ENCODE measurements at regions of chr13 and their contacts with region 1.

Region 1: DNA sequence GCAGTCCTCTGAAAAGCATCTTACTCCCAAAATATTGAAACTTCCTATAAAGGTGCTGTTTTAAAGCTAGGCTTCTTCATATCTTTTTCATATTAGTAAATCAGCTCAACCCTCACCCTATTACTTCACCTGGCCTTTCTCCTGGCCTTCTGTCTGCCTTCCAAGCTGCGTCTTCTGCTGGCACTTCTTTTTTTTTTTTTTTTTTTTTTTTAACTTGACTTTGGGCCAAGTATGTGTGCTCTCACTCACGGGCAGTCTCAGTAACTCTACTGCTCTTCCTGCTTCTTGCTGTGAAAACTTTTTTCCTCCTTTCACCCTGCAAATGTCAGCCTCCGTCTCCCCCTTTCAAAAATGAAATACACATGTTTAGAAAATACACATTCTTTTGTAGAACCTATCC is 41.2 kb upstream of the KCTD4 start:
- DNase-seq: peak; percentile 71
- H3K4me3 Mint-ChIP-seq: peak overlapping the region; percentile 4
- H3K27ac Mint-ChIP-seq: peak overlapping the region; percentile 2
- H3K4me1 Mint-ChIP-seq: peaks cover 23% of the 10 kb centered on the region
- H3K27me3 Mint-ChIP-seq: no peaks in the 10 kb centered on the region
- CTCF ChIP-seq: no peak

Region 2: GRCh38 chr13:45055198-45055901 is 186.7 kb before region 1 on chr13:
- CTCF ChIA-PET with region 1: no interaction called
- POLR2A ChIA-PET with region 1: interaction called, 13 read pairs
- intact Hi-C with region 1: no loop called
- DNase-seq: peak; percentile 93
- H3K4me3 Mint-ChIP-seq: peak overlapping the region; percentile 66
- H3K27ac Mint-ChIP-seq: peak overlapping the region; percentile 88
- H3K4me1 Mint-ChIP-seq: peaks cover 14% of the 10 kb centered on the region
- H3K27me3 Mint-ChIP-seq: no peaks in the 10 kb centered on the region
- CTCF ChIP-seq: no peak

Region 3: GRCh38 chr13:45200701-45201227 is 41.3 kb before region 1 on chr13 and contains the start of gene KCTD4:
- CTCF ChIA-PET with region 1: interaction called, 3 read pairs
- POLR2A ChIA-PET with region 1: interaction called, 78 read pairs
- intact Hi-C with region 1: loop called (anchors 5 kb)
- DNase-seq: peak; percentile 42
- H3K4me3 Mint-ChIP-seq: no peak within 1 kb of the TSS
- H3K27ac Mint-ChIP-seq: peak within 1 kb of the TSS; percentile 8
- H3K4me1 Mint-ChIP-seq: peaks cover 34% of the 10 kb centered on the region
- H3K27me3 Mint-ChIP-seq: no peaks in the 10 kb centered on the region
- CTCF ChIP-seq: no peak
- total RNA-seq, gene KCTD4: 0.54 and 0.79 TPM in 2 replicates

Region 4: GRCh38 chr13:45206340-45206739 is 35.7 kb before region 1 on chr13:
- CTCF ChIA-PET with region 1: interaction called, 6 read pairs
- POLR2A ChIA-PET with region 1: interaction called, 78 read pairs
- intact Hi-C with region 1: loop called (anchors 5 kb)
- DNase-seq: peak; percentile 88
- H3K4me3 Mint-ChIP-seq: peak overlapping the region; percentile 56
- H3K27ac Mint-ChIP-seq: peak overlapping the region; percentile 88
- H3K4me1 Mint-ChIP-seq: peaks cover 47% of the 10 kb centered on the region
- H3K27me3 Mint-ChIP-seq: no peaks in the 10 kb centered on the region
- CTCF ChIP-seq: no peak

Region 5: DNA sequence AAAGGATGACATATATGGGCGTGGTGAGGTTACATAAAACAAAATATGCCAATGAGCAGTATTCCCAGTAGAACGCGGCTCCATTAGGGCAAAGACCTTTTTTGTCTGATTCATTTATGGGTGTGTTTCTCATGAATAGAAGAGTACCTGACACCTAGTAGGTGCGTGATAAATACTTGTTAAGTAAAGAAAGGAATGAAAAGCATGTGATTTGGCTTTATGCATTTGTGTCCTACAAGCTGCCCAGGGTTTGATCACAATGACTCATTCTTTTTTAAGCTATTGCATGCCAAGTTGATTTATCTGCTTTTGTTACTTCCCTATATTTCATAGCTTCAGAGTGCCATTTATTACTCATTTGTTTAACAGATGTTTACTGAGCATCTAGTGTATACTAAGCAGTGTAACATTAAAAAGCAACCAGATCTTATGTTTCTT is 22.1 kb before region 1 on chr13:
- CTCF ChIA-PET with region 1: interaction called, 3 read pairs
- POLR2A ChIA-PET with region 1: interaction called, 73 read pairs
- intact Hi-C with region 1: no loop called
- DNase-seq: peak; percentile 90
- H3K4me3 Mint-ChIP-seq: peak overlapping the region; percentile 28
- H3K27ac Mint-ChIP-seq: peak overlapping the region; percentile 81
- H3K4me1 Mint-ChIP-seq: peaks cover 48% of the 10 kb centered on the region
- H3K27me3 Mint-ChIP-seq: no peaks in the 10 kb centered on the region
- CTCF ChIP-seq: no peak

Region 6: DNA sequence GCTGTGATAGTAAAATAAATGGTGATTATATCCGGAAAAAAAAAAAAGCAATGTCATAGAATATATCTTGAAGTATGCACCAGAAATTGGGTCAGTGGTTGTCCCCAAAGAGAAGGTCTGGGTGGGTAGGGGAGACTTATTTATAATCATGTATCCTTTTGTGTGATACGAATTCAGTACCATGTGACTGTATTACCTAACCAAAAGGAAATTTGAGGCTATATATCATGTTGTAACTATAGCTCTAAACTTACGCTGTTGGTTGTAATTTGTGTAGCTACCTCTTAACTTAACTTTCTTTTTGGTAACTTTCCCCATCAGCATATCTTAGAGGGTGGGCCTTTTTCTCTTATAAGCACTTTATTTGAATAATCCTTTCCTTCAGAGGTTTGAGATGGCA is 16.0 kb before region 1 on chr13:
- CTCF ChIA-PET with region 1: interaction called, 3 read pairs
- POLR2A ChIA-PET with region 1: interaction called, 73 read pairs
- intact Hi-C with region 1: no loop called
- DNase-seq: no peak
- H3K4me3 Mint-ChIP-seq: no peak overlapping the region
- H3K27ac Mint-ChIP-seq: no peak overlapping the region
- H3K4me1 Mint-ChIP-seq: peaks cover 27% of the 10 kb centered on the region
- H3K27me3 Mint-ChIP-seq: no peaks in the 10 kb centered on the region
- CTCF ChIP-seq: no peak

Region 7: GRCh38 chr13:45257638-45258338 is 15.7 kb after region 1 on chr13:
- CTCF ChIA-PET with region 1: interaction called, 8 read pairs
- POLR2A ChIA-PET with region 1: interaction called, 27 read pairs
- intact Hi-C with region 1: loop called (anchors 1 kb)
- DNase-seq: no peak
- H3K4me3 Mint-ChIP-seq: no peak overlapping the region
- H3K27ac Mint-ChIP-seq: no peak overlapping the region
- H3K4me1 Mint-ChIP-seq: peaks cover 22% of the 10 kb centered on the region
- H3K27me3 Mint-ChIP-seq: no peaks in the 10 kb centered on the region
- CTCF ChIP-seq: no peak

Region 8: GRCh38 chr13:45295536-45295935 is 53.5 kb after region 1 on chr13:
- CTCF ChIA-PET with region 1: no interaction called
- POLR2A ChIA-PET with region 1: no interaction called
- intact Hi-C with region 1: no loop called
- DNase-seq: no peak
- H3K4me3 Mint-ChIP-seq: no peak overlapping the region
- H3K27ac Mint-ChIP-seq: no peak overlapping the region
- H3K4me1 Mint-ChIP-seq: peaks cover 13% of the 10 kb centered on the region
- H3K27me3 Mint-ChIP-seq: no peaks in the 10 kb centered on the region
- CTCF ChIP-seq: no peak

Measured in MCF 10A (cell line).